ENCODE measurements at regions of chr11 and their contacts with region 1.

Region 1: DNA sequence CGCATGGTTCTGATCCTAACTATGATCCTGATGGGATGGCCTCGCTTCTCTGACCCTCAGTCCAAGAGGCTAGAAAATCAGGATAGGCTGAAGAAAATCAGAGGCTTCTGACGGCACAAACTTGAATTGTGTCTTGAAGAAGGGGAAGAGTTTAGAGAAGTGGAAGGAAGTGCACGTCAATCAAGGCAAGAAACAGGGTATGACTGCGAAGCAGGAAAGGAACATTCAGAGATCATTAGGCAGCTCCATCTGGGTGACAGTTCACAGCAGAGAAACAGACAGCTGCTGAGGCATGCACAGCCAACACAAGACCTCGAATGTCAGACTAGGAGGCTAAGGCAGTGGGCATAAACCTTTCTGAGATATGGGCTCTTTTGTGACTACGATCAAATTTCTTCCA is 29.3 kb downstream of the CLPB start:
- DNase-seq: no peak
- ATAC-seq: peak in 6 of 8 donors; percentile 42 to 80 (median 58)
- H3K4me3 ChIP-seq: no peak overlapping the region
- H3K27ac ChIP-seq: peak overlapping the region in 1 of 10 donors; percentile 67
- H3K4me1 ChIP-seq: peaks cover 0 to 23% (median 0%) of the 10 kb centered on the region in 9 donors
- H3K27me3 ChIP-seq: no peaks in the 10 kb centered on the region
- CTCF ChIP-seq: no peak

Region 2: GRCh38 chr11:72349616-72350218 is 55.3 kb before region 1 on chr11:
- intact Hi-C with region 1: loop called in 1 of 10 experiments (anchors 10 kb)
- DNase-seq: peak; percentile 47 to 54
- ATAC-seq: peak; percentile 74 to 96 (median 92)
- H3K4me3 ChIP-seq: no peak overlapping the region
- H3K27ac ChIP-seq: peak overlapping the region in 3 of 10 donors; percentile 3 to 23 (median 15)
- H3K4me1 ChIP-seq: peaks cover 0 to 28% (median 17%) of the 10 kb centered on the region in 9 donors
- H3K27me3 ChIP-seq: no peaks in the 10 kb centered on the region
- CTCF ChIP-seq: no peak

Region 3: DNA sequence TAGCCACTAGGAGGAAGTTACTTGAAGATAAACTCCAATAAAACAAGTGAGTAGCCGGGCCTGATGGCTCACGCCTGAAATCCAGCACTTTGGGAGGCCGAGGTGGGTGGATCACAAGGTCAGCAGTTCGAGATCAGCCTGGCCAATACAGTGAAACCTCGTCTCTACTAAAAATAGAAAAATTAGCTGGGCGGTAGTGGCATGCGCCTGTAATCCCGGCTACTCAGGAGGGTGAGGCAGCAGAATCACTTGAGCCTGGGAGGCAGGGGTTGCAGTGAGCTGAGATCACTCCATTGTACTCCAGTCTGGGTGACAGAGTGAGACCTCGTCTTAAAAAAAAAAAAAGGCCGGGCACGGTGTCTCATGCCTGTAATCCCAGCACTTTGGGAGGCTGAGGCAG is 63.3 kb after region 1 on chr11:
- intact Hi-C with region 1: no loop called
- DNase-seq: peak in 1 of 2 donors; percentile 12
- ATAC-seq: peak in 4 of 8 donors; percentile 16 to 70 (median 50)
- H3K4me3 ChIP-seq: no peak overlapping the region
- H3K27ac ChIP-seq: no peak overlapping the region
- H3K4me1 ChIP-seq: peaks cover 0 to 12% (median 5%) of the 10 kb centered on the region in 9 donors
- H3K27me3 ChIP-seq: peaks cover 0 to 50% (median 23%) of the 10 kb centered on the region in 7 donors
- CTCF ChIP-seq: no peak